ENCODE measurements at regions of chr6 and their contacts with region 1.

Region 1: GRCh38 chr6:165439928-165440554 is 130.6 kb upstream of the C6orf118 start:
- DNase-seq: no peak
- H3K4me3 ChIP-seq: no peak overlapping the region
- H3K27ac ChIP-seq: no peak overlapping the region
- H3K4me1 ChIP-seq: no peaks in the 10 kb centered on the region
- H3K27me3 ChIP-seq: no peaks in the 10 kb centered on the region
- CTCF ChIP-seq: peak; percentile 44 to 52

Region 2: GRCh38 chr6:165850434-165851019 is 410.5 kb after region 1 on chr6:
- intact Hi-C with region 1: loop called (anchors 10 kb)
- DNase-seq: peak in 1 of 2 donors; percentile 53
- H3K4me3 ChIP-seq: no peak overlapping the region
- H3K27ac ChIP-seq: no peak overlapping the region
- H3K4me1 ChIP-seq: peaks cover 0 to 19% (median 7%) of the 10 kb centered on the region in 4 donors
- H3K27me3 ChIP-seq: peaks cover 0 to 64% of the 10 kb centered on the region in 2 donors
- CTCF ChIP-seq: peak; percentile 81 to 99